CD4-positive, alpha-beta T cell (primary cell): ENCODE measurements at regions of chr6 and their contacts with region 1.

Region 1: GRCh38 chr6:17584241-17584803 is 15.8 kb upstream of the FAM8A1 start:
- DNase-seq: peak in 4 of 14 experiments; percentile 17 to 70 (median 61)
- ATAC-seq: peak; percentile 69
- H3K4me3 ChIP-seq: no peak overlapping the region
- H3K4me3 Mint-ChIP-seq: no peak overlapping the region
- H3K27ac ChIP-seq: no peak overlapping the region
- H3K27ac Mint-ChIP-seq: peak overlapping the region; percentile 7
- H3K4me1 ChIP-seq: peaks cover 5% of the 10 kb centered on the region
- H3K4me1 Mint-ChIP-seq: peaks cover 10% of the 10 kb centered on the region
- H3K27me3 ChIP-seq: peaks cover 0 to 3% of the 10 kb centered on the region in 2 experiments
- H3K27me3 Mint-ChIP-seq: peaks cover 5% of the 10 kb centered on the region
- CTCF ChIP-seq: peak; percentile 99

Region 2: DNA sequence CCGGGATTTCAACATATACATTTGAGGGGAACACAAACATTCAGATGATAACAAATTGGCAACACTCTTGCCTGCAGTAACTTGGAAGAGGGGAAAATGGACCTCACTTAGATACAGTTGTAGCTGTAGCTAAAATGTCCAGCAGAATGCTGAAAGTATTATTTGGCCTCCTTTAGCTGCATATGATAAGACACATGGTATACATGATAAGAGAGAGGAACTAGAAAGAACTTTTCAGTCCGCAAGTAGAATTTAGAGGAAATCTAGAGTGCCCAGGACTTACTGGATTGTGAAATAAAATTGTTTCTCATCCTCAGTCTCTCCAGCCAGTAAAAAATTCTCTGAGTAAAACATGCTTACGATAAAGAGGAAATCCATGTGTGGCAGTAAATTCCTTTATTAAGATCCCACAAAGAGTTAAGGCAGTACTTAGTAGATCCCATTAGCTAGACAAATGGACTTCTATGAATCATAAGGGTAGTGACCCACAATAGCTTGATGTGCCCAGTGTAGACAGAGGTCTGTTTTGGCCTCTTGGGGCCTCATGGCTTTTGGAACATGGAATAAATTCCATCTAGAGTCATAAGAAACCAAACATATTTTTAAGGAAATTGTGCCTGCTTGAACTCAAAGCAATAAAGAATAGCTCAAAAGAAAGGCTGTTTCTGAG is 391.1 kb before region 1 on chr6:
- CTCF ChIA-PET with region 1: no interaction called
- POLR2A ChIA-PET with region 1: no interaction called
- intact Hi-C with region 1: no loop called
- DNase-seq: no peak
- ATAC-seq: no peak
- H3K4me3 ChIP-seq: no peak overlapping the region
- H3K4me3 Mint-ChIP-seq: no peak overlapping the region
- H3K27ac ChIP-seq: no peak overlapping the region
- H3K27ac Mint-ChIP-seq: no peak overlapping the region
- H3K4me1 ChIP-seq: no peaks in the 10 kb centered on the region
- H3K4me1 Mint-ChIP-seq: no peaks in the 10 kb centered on the region
- H3K27me3 ChIP-seq: peaks cover 3% of the 10 kb centered on the region in 2 experiments
- H3K27me3 Mint-ChIP-seq: peaks cover 11% of the 10 kb centered on the region
- CTCF ChIP-seq: no peak

Region 3: DNA sequence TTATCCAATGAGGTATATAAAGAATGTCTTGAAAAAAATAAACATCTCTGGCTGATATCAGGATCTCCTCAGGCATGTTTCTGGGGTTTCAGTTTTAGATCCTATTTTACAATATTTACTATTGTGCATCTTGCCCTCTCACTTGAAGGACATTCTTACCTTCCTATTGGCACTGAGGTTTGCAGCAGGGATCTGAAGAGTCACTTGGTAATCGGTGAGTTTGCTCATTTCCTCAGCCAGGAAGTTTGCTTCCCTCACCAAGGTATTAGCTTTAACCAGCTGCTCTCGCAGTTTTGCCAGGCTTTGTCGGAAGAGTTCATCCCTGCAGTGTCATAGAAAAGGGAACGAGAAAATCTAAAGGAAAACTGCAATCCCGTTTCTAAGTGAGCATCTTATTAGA is 224.3 kb after region 1 on chr6:
- CTCF ChIA-PET with region 1: interaction called, 4 read pairs
- POLR2A ChIA-PET with region 1: interaction called, 4 read pairs
- intact Hi-C with region 1: loop called (anchors 1 kb)
- DNase-seq: no peak
- ATAC-seq: no peak
- H3K4me3 ChIP-seq: no peak overlapping the region
- H3K4me3 Mint-ChIP-seq: no peak overlapping the region
- H3K27ac ChIP-seq: no peak overlapping the region
- H3K27ac Mint-ChIP-seq: no peak overlapping the region
- H3K4me1 ChIP-seq: no peaks in the 10 kb centered on the region
- H3K4me1 Mint-ChIP-seq: no peaks in the 10 kb centered on the region
- H3K27me3 ChIP-seq: no peaks in the 10 kb centered on the region
- H3K27me3 Mint-ChIP-seq: peaks cover 5% of the 10 kb centered on the region
- CTCF ChIP-seq: no peak

Region 4: DNA sequence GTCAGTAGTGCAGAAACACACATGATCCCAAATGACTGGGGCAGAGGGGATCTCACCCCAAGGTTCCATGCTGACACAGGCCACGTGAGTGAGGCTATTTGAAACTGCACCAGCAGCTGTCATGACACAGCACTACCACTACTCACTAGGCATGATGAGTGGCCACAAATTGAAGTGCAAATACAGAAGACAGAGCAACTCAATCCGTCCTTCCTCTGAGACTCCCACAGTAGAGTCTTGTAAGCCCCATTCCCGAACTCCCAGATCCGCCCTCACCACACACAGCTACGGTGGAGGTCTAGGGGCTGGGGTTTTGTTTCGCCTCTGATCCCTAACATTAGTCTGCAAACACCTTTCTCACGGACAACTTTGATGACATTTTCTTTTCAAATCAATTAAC is 235.7 kb after region 1 on chr6:
- CTCF ChIA-PET with region 1: no interaction called
- POLR2A ChIA-PET with region 1: no interaction called
- intact Hi-C with region 1: loop called in 1 of 2 experiments (anchors 5 kb)
- DNase-seq: no peak
- ATAC-seq: no peak
- H3K4me3 ChIP-seq: no peak overlapping the region
- H3K4me3 Mint-ChIP-seq: no peak overlapping the region
- H3K27ac ChIP-seq: no peak overlapping the region
- H3K27ac Mint-ChIP-seq: no peak overlapping the region
- H3K4me1 ChIP-seq: no peaks in the 10 kb centered on the region
- H3K4me1 Mint-ChIP-seq: no peaks in the 10 kb centered on the region
- H3K27me3 ChIP-seq: no peaks in the 10 kb centered on the region
- H3K27me3 Mint-ChIP-seq: peaks cover 7% of the 10 kb centered on the region
- CTCF ChIP-seq: no peak